ENCODE measurements at regions of chr2 and their contacts with region 1.

Region 1: GRCh38 chr2:12430407-12431133 is 286.2 kb upstream of the TRIB2 start:
- DNase-seq: peak; percentile 32
- ATAC-seq: peak; percentile 65
- H3K4me3 ChIP-seq: no peak overlapping the region
- H3K27ac ChIP-seq: 0 out of 2 replicates have a peak overlapping the region, but pooled peaks have one; percentile 1
- H3K4me1 ChIP-seq: peaks cover 20% of the 10 kb centered on the region
- H3K27me3 ChIP-seq: no peaks in the 10 kb centered on the region
- CTCF ChIP-seq: no peak

Region 2: DNA sequence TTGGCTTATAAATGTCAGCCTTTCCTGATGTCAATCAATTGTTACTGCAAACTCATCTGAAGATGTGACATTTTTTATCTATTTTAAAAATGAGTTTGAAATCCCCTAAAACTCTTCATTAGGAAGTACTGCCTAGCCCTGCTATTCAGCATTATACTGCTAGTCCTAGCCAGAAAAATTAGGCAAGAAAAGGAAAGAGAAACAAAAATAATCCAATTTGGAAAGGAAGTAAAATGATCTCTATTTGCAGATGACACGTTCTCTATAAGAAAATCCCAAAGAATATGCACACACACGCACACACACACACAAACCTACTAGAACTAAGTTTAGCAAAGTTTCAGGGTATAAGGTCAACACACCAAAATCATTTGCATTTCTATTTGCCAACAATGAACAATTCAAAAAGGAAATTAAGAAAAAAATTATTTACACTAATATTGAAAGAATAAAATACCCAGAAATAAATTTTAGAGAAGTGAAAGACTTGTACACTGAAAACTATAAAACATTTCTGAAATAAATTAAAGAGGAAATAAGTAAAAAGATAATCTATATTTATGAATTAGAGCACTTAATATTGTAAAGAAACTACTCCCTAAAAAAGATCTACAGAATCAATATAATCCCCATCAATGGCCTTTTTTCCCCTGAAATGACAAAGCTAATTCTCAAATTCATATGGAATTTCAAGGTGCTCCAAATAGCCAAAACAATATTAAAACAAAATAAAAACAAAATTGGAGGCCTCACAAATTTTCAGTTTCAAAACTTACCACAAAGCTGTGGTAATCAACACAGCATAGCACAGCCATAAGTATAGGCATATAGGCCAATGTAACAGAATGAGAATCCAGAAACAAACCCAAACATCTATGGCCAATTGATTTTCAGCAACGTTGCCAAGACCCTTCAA is 147.5 kb before region 1 on chr2:
- CTCF ChIA-PET with region 1: no interaction called
- POLR2A ChIA-PET with region 1: no interaction called
- intact Hi-C with region 1: no loop called
- DNase-seq: no peak
- ATAC-seq: no peak
- H3K4me3 ChIP-seq: no peak overlapping the region
- H3K27ac ChIP-seq: no peak overlapping the region
- H3K4me1 ChIP-seq: peaks cover 36% of the 10 kb centered on the region
- H3K27me3 ChIP-seq: no peaks in the 10 kb centered on the region
- CTCF ChIP-seq: no peak

Region 3: GRCh38 chr2:12534646-12535263 is 104.2 kb after region 1 on chr2:
- CTCF ChIA-PET with region 1: no interaction called
- POLR2A ChIA-PET with region 1: no interaction called
- intact Hi-C with region 1: loop called (anchors 10 kb)
- DNase-seq: peak; percentile 96
- ATAC-seq: peak; percentile 90
- H3K4me3 ChIP-seq: no peak overlapping the region
- H3K27ac ChIP-seq: peak overlapping the region; percentile 81
- H3K4me1 ChIP-seq: peaks cover 33% of the 10 kb centered on the region
- H3K27me3 ChIP-seq: no peaks in the 10 kb centered on the region
- CTCF ChIP-seq: no peak

Measured in PC-3 (cell line).